CD4-positive, alpha-beta memory T cell (primary cell): ENCODE measurements at regions of chr11 and their contacts with region 1.

Region 1: DNA sequence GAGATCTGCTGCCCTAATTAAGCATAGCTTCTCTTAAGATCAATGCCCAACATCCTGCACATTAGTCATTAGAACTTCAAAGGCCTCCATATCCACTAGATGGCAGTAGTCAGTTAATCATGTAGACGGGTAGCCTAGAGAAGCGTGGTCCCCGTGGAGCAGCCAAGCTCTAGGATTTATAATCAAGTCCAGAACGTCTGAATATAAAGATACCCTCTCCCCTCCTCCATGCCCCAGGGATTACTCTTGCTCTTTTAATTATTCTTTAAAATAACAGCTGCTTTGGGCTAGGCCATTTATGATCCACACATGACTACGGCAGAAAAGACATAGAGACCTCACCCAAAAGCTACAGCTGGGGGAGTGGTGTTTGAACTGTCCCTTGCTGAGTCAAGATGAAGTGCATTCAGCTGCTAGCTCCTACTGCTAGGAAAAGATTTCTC is 327.6 kb upstream of the PLET1 start:
- DNase-seq: peak in 4 of 5 donors; percentile 38 to 52 (median 50)
- H3K4me3 ChIP-seq: no peak overlapping the region
- H3K4me3 Mint-ChIP-seq: peak overlapping the region in 2 of 8 donors; percentile 48 to 60
- H3K27ac ChIP-seq: no peak overlapping the region
- H3K27ac Mint-ChIP-seq: no peak overlapping the region
- H3K4me1 ChIP-seq: no peaks in the 10 kb centered on the region
- H3K4me1 Mint-ChIP-seq: peaks cover 0 to 6% (median 4%) of the 10 kb centered on the region in 4 donors
- H3K27me3 ChIP-seq: no peaks in the 10 kb centered on the region
- H3K27me3 Mint-ChIP-seq: no peaks in the 10 kb centered on the region

Region 2: GRCh38 chr11:112289588-112290492 is 298.4 kb before region 1 on chr11:
- CTCF ChIA-PET with region 1: interaction called, 16 read pairs
- POLR2A ChIA-PET with region 1: no interaction called
- intact Hi-C with region 1: no loop called
- DNase-seq: peak; percentile 83 to 87 (median 86)
- H3K4me3 ChIP-seq: peak overlapping the region in 1 of 2 donors; percentile 35
- H3K4me3 Mint-ChIP-seq: peak overlapping the region; percentile 74 to 90 (median 86)
- H3K27ac ChIP-seq: peak overlapping the region; percentile 50
- H3K27ac Mint-ChIP-seq: peak overlapping the region; percentile 43 to 88 (median 73)
- H3K4me1 ChIP-seq: peaks cover 19% of the 10 kb centered on the region
- H3K4me1 Mint-ChIP-seq: peaks cover 11 to 34% (median 23%) of the 10 kb centered on the region in 4 donors
- H3K27me3 ChIP-seq: no peaks in the 10 kb centered on the region
- H3K27me3 Mint-ChIP-seq: no peaks in the 10 kb centered on the region

Region 3: GRCh38 chr11:112564228-112564955 is 23.9 kb before region 1 on chr11:
- CTCF ChIA-PET with region 1: interaction called, 14 read pairs
- POLR2A ChIA-PET with region 1: no interaction called
- intact Hi-C with region 1: no loop called
- DNase-seq: no peak
- H3K4me3 ChIP-seq: no peak overlapping the region
- H3K4me3 Mint-ChIP-seq: no peak overlapping the region
- H3K27ac ChIP-seq: no peak overlapping the region
- H3K27ac Mint-ChIP-seq: no peak overlapping the region
- H3K4me1 ChIP-seq: no peaks in the 10 kb centered on the region
- H3K4me1 Mint-ChIP-seq: no peaks in the 10 kb centered on the region
- H3K27me3 ChIP-seq: no peaks in the 10 kb centered on the region
- H3K27me3 Mint-ChIP-seq: peaks cover 7 to 12% of the 10 kb centered on the region in 2 donors

Region 4: DNA sequence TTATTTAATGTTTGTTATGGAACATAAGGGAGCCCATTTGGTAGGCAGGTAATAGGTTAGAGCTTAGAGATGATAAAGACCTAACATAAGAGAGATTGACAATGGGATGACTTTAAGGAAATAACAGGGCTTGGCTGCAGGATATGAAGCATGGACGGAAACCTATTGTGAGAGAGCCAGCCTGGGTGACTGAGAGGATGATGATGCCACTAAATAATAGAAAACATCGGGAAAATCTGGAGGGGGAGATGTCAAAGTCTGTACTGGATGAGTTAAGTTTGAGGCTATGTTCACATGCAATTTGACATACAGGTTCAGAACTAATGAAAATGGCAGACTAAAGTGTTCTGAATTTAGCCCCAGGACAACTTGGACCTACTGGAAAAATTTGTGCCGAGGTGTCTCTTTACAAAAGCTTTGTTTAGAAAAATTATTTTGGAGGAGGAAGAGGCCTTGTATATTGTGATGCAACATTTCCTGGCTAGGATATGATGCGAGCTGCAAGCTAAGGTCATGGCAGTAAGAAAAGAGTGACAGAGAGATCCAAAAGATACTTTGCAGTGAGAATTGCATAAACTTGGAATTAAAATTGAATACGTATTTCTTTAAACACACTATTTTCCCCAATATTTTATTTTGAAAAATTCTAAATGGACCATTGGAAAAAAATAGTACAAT is 11.7 kb after region 1 on chr11:
- CTCF ChIA-PET with region 1: interaction called, 22 read pairs
- POLR2A ChIA-PET with region 1: no interaction called
- intact Hi-C with region 1: no loop called
- DNase-seq: no peak
- H3K4me3 ChIP-seq: no peak overlapping the region
- H3K4me3 Mint-ChIP-seq: no peak overlapping the region
- H3K27ac ChIP-seq: no peak overlapping the region
- H3K27ac Mint-ChIP-seq: no peak overlapping the region
- H3K4me1 ChIP-seq: no peaks in the 10 kb centered on the region
- H3K4me1 Mint-ChIP-seq: peaks cover 0 to 8% (median 4%) of the 10 kb centered on the region in 4 donors
- H3K27me3 ChIP-seq: no peaks in the 10 kb centered on the region
- H3K27me3 Mint-ChIP-seq: peaks cover 6 to 9% of the 10 kb centered on the region in 2 donors